MCF 10A (cell line): ENCODE measurements at regions of chr20 and their contacts with region 1.

Region 1: DNA sequence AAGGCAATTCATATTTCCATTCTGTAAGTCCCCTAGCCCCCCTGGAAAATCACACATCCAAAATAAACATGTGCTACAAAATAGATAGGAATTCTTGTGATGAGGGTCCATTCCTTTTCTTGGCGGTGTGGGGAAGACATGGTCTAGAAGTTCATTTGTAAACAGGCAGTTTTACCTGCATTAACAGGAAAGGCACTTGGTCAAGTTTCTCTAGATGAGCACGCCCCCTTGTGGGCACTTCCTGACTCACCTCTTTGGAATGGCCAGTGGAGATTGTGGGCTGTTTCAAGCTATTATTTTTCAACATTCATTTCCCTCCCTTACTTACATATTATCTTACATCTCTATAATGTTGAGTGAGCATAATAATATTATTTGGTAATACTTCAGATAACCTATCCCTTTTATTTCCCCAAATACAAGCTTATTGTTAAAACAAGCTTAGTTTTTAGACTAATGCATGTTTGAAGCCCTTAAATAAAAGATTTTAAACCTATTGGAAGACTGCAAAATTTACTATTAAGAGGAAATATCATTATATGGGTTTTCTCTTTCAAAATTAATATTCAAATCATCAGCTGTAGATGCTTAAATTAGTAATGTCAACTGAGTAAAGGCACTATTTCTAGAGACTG is 92.1 kb downstream of the TASP1 start:
- DNase-seq: peak; percentile 86
- H3K4me3 Mint-ChIP-seq: no peak overlapping the region
- H3K27ac Mint-ChIP-seq: peak overlapping the region; percentile 4
- H3K4me1 Mint-ChIP-seq: peaks cover 3% of the 10 kb centered on the region
- H3K27me3 Mint-ChIP-seq: no peaks in the 10 kb centered on the region
- CTCF ChIP-seq: peak; percentile 67

Region 2: DNA sequence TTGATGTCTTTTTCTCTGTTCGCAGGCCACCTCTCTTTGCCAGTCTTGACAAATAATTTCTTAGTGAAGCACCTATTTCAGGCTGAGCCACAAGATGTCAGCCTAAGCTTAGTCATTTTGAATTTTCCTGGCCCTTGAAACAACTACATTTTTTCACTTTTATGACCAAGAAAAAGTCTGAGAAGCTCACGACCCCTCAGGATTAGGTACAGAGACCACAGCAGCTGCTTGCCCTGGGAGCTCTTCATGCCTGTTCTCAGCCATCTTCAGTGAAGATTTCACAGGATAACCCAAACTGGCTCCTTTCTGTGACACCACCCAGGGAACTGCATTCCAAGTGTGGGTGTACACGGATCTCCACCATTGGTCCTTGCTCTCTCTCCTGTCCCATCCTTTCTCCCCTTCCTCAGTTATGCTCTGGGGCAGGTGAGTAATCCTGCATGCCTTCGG is 576.2 kb before region 1 on chr20:
- CTCF ChIA-PET with region 1: interaction called, 21 read pairs
- POLR2A ChIA-PET with region 1: no interaction called
- intact Hi-C with region 1: loop called (anchors 2 kb)
- DNase-seq: peak; percentile 56
- H3K4me3 Mint-ChIP-seq: no peak overlapping the region
- H3K27ac Mint-ChIP-seq: no peak overlapping the region
- H3K4me1 Mint-ChIP-seq: no peaks in the 10 kb centered on the region
- H3K27me3 Mint-ChIP-seq: no peaks in the 10 kb centered on the region
- CTCF ChIP-seq: peak; percentile 70

Region 3: GRCh38 chr20:13131688-13132087 is 414.9 kb before region 1 on chr20:
- CTCF ChIA-PET with region 1: interaction called, 255 read pairs
- POLR2A ChIA-PET with region 1: interaction called, 3 read pairs
- intact Hi-C with region 1: no loop called
- DNase-seq: no peak
- H3K4me3 Mint-ChIP-seq: no peak overlapping the region
- H3K27ac Mint-ChIP-seq: no peak overlapping the region
- H3K4me1 Mint-ChIP-seq: no peaks in the 10 kb centered on the region
- H3K27me3 Mint-ChIP-seq: no peaks in the 10 kb centered on the region
- CTCF ChIP-seq: no peak

Region 4: GRCh38 chr20:13355411-13355810 is 191.2 kb before region 1 on chr20:
- CTCF ChIA-PET with region 1: interaction called, 16 read pairs
- POLR2A ChIA-PET with region 1: no interaction called
- intact Hi-C with region 1: no loop called
- DNase-seq: peak; percentile 56
- H3K4me3 Mint-ChIP-seq: no peak overlapping the region
- H3K27ac Mint-ChIP-seq: no peak overlapping the region
- H3K4me1 Mint-ChIP-seq: peaks cover 11% of the 10 kb centered on the region
- H3K27me3 Mint-ChIP-seq: no peaks in the 10 kb centered on the region
- CTCF ChIP-seq: no peak

Region 5: DNA sequence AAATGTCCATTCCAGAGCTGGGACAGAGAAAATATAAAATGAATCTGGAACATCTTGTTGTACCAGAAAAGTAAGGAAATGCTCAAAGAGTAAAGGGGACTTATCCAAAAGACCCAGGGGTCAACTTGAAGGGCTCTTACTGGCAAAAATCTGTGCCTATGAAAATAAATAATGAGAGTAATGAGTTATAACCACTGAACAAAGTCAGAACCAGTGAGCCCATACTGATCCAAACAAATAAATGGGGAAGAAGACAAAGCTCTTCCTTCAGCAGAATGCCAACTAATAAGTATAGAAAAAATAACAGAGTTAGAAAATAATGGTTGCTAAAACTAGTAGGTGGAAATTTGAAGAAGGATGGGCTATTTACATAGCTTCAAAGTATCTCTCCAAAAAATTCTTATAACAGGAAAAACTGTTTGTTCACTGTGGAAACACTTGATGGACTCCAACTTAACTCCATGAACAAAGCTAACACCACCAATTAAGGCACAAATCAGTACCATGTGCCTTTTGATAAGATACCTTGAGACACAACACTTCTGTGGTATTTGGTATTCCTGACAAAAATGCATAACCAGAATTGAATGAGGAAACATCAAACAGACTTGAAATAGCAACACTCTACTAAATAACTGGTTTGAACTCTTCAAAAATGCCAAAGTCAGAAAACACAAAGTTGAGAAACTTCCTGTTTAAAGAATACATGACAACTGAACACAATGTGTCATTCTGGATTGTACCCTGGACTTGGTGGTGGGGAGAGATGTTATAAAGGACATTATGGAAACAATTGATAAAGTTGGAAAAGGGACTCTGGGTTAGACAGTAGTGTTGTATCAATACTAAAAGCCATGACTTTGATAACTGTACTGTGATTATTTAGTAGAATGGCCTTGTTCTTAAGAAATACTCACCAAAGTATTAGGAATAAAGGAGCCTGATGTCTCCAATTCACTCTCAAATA is 128.1 kb before region 1 on chr20:
- CTCF ChIA-PET with region 1: interaction called, 10 read pairs
- POLR2A ChIA-PET with region 1: interaction called, 4 read pairs
- intact Hi-C with region 1: no loop called
- DNase-seq: no peak
- H3K4me3 Mint-ChIP-seq: no peak overlapping the region
- H3K27ac Mint-ChIP-seq: no peak overlapping the region
- H3K4me1 Mint-ChIP-seq: no peaks in the 10 kb centered on the region
- H3K27me3 Mint-ChIP-seq: no peaks in the 10 kb centered on the region
- CTCF ChIP-seq: no peak

Region 6: DNA sequence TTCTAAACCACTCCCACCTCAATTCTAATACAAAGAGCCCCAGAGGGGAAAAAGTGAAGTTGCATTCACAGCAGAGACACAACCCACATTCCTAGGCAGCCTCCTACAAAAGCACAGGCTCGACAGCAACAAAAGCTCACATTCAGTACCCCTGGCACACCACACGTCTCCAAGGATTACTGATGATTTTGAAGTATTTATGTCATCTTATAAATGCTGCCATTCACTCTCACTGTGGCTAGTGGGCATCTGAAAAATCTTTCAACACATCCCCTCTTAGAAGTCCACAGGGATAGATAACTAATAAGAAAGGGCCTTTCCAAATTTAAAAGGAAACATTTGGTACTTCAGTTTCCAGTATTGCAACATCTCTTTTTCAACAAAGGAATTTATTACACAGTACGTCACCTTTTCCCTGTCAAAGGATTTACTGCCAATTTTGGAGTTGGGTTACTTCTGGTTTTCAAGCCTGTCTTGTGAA is 54.6 kb before region 1 on chr20:
- CTCF ChIA-PET with region 1: interaction called, 28 read pairs
- POLR2A ChIA-PET with region 1: interaction called, 3 read pairs
- intact Hi-C with region 1: no loop called
- DNase-seq: peak; percentile 77
- H3K4me3 Mint-ChIP-seq: peak overlapping the region; percentile 62
- H3K27ac Mint-ChIP-seq: peak overlapping the region; percentile 96
- H3K4me1 Mint-ChIP-seq: peaks cover 19% of the 10 kb centered on the region
- H3K27me3 Mint-ChIP-seq: no peaks in the 10 kb centered on the region
- CTCF ChIP-seq: no peak

Region 7: DNA sequence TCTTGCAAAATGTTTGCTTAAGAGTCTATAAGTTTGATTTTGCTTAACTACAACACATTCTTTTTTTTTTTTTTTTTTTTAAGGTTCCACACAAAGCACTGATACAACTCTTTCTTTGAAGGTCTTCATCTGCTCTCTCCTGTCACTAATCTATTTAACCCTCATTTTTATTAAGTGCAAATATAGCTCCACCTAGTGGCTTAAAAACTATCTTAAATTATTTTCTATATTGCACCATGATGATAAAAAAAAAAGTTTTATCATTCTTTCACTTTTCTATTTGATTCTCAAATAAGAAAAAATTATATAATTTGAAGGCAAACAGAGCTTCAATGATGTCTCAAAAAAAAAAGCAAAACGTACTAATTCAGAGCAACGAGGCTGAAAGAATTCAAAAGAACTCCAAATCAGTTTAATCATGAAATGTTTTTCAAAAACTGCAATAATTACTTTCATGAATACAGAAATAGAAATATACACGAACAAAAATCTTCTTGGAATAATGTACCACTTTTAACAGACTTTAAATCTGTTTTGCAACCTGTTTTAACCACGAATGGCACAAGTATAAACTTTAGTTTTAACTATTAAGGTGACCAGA is 225.3 kb after region 1 on chr20:
- CTCF ChIA-PET with region 1: interaction called, 31 read pairs
- POLR2A ChIA-PET with region 1: interaction called, 3 read pairs
- intact Hi-C with region 1: loop called (anchors 10 kb)
- DNase-seq: no peak
- H3K4me3 Mint-ChIP-seq: no peak overlapping the region
- H3K27ac Mint-ChIP-seq: peak overlapping the region; percentile 87
- H3K4me1 Mint-ChIP-seq: peaks cover 15% of the 10 kb centered on the region
- H3K27me3 Mint-ChIP-seq: no peaks in the 10 kb centered on the region
- CTCF ChIP-seq: peak; percentile 42